ENCODE measurements at regions of chr15 and their contacts with region 1.

Region 1: DNA sequence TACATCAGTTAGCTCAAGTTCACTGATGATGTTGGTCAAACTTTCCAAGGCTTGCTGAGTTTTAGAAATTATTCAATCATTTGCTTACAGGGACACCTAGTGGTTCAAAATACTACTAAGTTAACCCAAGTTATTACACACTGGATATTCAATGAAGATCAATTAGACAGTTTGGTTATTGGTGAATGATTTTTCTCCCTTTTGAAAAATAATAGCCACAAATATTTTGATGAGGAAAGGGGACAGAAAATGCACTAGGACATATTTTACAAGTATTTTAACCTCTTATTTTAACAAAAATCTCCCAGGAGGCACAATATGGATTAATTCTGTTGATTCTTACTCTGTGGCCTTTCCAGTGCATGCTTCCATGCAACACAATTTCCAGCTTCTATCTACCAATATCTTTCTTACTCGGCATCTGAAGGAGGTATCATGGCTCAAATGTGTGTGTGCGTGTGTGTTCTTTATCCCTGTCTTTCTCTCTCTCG is 20.1 kb upstream of the GOLGA6L2 start:
- DNase-seq: peak in 1 of 2 experiments; percentile 28
- H3K4me3 ChIP-seq: no peak overlapping the region
- H3K4me3 Mint-ChIP-seq: no peak overlapping the region
- H3K27ac Mint-ChIP-seq: no peak overlapping the region
- H3K4me1 ChIP-seq: no peaks in the 10 kb centered on the region
- H3K4me1 Mint-ChIP-seq: no peaks in the 10 kb centered on the region
- H3K27me3 ChIP-seq: no peaks in the 10 kb centered on the region
- H3K27me3 Mint-ChIP-seq: peaks cover 9% of the 10 kb centered on the region
- CTCF ChIP-seq: peak; percentile 24 to 44

Region 2: DNA sequence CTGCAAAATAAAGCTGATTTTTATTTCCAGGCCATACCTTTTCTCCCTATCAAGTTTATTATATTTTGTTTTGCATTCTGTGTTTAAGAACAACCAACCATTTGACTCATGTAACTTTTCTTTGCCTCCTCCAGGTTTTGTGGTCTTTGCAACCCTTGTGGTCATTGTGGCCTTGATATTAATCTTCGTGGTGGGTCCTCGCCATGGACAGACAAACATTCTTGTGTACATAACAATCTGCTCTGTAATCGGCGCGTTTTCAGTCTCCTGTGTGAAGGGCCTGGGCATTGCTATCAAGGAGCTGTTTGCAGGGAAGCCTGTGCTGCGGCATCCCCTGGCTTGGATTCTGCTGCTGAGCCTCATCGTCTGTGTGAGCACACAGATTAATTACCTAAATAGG is 601.1 kb before region 1 on chr15:
- CTCF ChIA-PET with region 1: interaction called, 3 read pairs
- POLR2A ChIA-PET with region 1: no interaction called
- intact Hi-C with region 1: loop called (anchors 10 kb)
- DNase-seq: no peak
- H3K4me3 ChIP-seq: no peak overlapping the region
- H3K4me3 Mint-ChIP-seq: no peak overlapping the region
- H3K27ac Mint-ChIP-seq: no peak overlapping the region
- H3K4me1 ChIP-seq: no peaks in the 10 kb centered on the region
- H3K4me1 Mint-ChIP-seq: no peaks in the 10 kb centered on the region
- H3K27me3 ChIP-seq: no peaks in the 10 kb centered on the region
- H3K27me3 Mint-ChIP-seq: no peaks in the 10 kb centered on the region
- CTCF ChIP-seq: no peak

Region 3: DNA sequence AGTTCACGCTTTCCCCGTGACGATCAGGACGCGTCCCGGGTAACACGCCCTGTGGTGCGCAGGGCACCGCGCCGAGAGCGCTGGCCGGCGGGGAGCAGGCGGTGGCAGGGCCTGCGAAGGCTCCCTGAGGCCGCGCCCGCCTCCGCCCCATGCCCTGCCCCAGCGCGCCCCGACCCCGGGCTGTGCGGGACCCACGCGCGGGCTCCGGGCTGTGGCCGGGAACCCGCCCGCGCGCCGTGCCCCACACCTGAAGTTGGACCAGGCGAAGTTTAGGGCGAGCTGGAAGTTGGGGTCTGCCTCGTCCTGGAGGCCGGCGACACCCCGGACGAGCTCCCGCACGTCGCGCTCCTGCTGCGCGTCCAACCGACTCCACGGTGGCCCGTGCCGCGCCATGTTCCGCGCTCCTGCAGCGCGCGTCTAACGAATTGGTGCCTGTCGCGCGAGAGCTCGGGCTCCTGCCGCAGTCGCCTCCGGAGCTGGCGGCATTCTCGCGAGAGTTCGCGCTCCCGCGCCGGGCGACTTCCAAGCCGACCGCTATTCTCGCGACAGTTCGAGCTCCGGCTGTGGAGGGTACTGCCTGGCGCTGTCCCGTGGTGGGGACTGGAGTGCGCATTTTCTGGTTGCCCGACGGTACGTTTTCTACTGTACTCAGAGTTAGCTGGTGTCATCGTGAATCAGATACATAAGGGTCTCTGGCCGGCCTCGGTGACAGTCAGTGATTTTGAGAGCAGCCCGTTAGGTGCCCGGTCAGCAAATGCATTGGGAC is 427.8 kb before region 1 on chr15 and contains the start of gene TUBGCP5:
- CTCF ChIA-PET with region 1: interaction called, 3 read pairs
- POLR2A ChIA-PET with region 1: no interaction called
- intact Hi-C with region 1: loop called (anchors 2 kb)
- DNase-seq: peak; percentile 99 to 100
- H3K4me3 ChIP-seq: peak within 1 kb of the TSS; percentile 79
- H3K4me3 Mint-ChIP-seq: peak within 1 kb of the TSS; percentile 99
- H3K27ac Mint-ChIP-seq: peak within 1 kb of the TSS; percentile 99
- H3K4me1 ChIP-seq: peaks cover 11% of the 10 kb centered on the region
- H3K4me1 Mint-ChIP-seq: peaks cover 17% of the 10 kb centered on the region
- H3K27me3 ChIP-seq: no peaks in the 10 kb centered on the region
- H3K27me3 Mint-ChIP-seq: no peaks in the 10 kb centered on the region
- CTCF ChIP-seq: peak; percentile 27 to 44
- total RNA-seq, gene TUBGCP5: 48.3 and 53.1 TPM in 2 replicates

Region 4: GRCh38 chr15:23403550-23403949 is 63.6 kb before region 1 on chr15:
- CTCF ChIA-PET with region 1: no interaction called
- POLR2A ChIA-PET with region 1: no interaction called
- intact Hi-C with region 1: loop called (anchors 10 kb)
- DNase-seq: no peak
- H3K4me3 ChIP-seq: no peak overlapping the region
- H3K4me3 Mint-ChIP-seq: no peak overlapping the region
- H3K27ac Mint-ChIP-seq: no peak overlapping the region
- H3K4me1 ChIP-seq: no peaks in the 10 kb centered on the region
- H3K4me1 Mint-ChIP-seq: no peaks in the 10 kb centered on the region
- H3K27me3 ChIP-seq: no peaks in the 10 kb centered on the region
- H3K27me3 Mint-ChIP-seq: peaks cover 6% of the 10 kb centered on the region
- CTCF ChIP-seq: no peak

Region 5: DNA sequence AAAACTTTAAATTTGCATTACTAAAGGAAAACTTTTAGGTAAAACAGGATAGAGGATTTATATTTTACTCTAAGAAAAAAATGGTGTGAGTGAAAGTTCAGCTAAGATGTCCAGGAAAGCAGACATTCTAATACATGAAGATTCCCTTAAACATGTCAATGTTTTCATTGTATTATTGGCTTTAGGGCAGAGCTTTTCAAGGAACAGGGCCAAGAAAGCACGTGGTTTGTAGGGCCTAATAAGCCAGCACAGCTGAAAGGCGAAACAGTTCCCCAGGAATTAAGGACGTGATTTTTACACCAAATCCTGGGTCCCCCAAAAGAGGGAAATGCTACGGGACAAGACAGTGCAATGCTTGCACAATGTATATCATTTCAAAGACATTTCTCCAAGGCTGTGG is 49.7 kb after region 1 on chr15:
- CTCF ChIA-PET with region 1: no interaction called
- POLR2A ChIA-PET with region 1: no interaction called
- intact Hi-C with region 1: no loop called
- DNase-seq: no peak
- H3K4me3 ChIP-seq: no peak overlapping the region
- H3K4me3 Mint-ChIP-seq: no peak overlapping the region
- H3K27ac Mint-ChIP-seq: no peak overlapping the region
- H3K4me1 ChIP-seq: peaks cover 10% of the 10 kb centered on the region
- H3K4me1 Mint-ChIP-seq: no peaks in the 10 kb centered on the region
- H3K27me3 ChIP-seq: no peaks in the 10 kb centered on the region; the same call in 1 of the 2 replicates
- H3K27me3 Mint-ChIP-seq: peaks cover 3% of the 10 kb centered on the region
- CTCF ChIP-seq: no peak

Region 6: GRCh38 chr15:23595368-23595767 is 128.2 kb after region 1 on chr15:
- CTCF ChIA-PET with region 1: no interaction called
- POLR2A ChIA-PET with region 1: no interaction called
- intact Hi-C with region 1: no loop called
- DNase-seq: no peak
- H3K4me3 ChIP-seq: no peak overlapping the region
- H3K4me3 Mint-ChIP-seq: no peak overlapping the region
- H3K27ac Mint-ChIP-seq: no peak overlapping the region
- H3K4me1 ChIP-seq: no peaks in the 10 kb centered on the region
- H3K4me1 Mint-ChIP-seq: no peaks in the 10 kb centered on the region
- H3K27me3 ChIP-seq: no peaks in the 10 kb centered on the region
- H3K27me3 Mint-ChIP-seq: no peaks in the 10 kb centered on the region
- CTCF ChIP-seq: no peak

Region 7: DNA sequence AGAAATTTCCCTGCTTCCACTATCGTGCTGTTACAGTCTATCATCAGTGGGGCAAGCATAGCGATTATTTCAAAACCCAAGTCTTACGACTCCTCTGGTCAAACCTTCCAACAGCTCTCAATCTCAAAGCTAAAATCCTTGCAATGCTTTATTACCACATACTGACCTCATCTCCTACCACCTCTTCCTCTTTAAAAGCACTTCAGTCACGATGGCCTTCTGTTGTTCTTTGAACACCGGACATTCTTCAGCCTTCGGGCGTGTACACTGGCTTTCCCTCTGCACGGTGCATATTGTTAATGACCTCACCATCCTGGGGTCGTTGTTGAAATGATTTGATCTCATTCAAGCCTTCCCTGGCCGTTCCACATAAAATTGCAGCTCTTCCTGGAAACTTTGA is 149.4 kb after region 1 on chr15:
- CTCF ChIA-PET with region 1: no interaction called
- POLR2A ChIA-PET with region 1: no interaction called
- intact Hi-C with region 1: no loop called
- DNase-seq: peak in 1 of 2 experiments; percentile 9
- H3K4me3 ChIP-seq: no peak overlapping the region
- H3K4me3 Mint-ChIP-seq: no peak overlapping the region
- H3K27ac Mint-ChIP-seq: no peak overlapping the region
- H3K4me1 ChIP-seq: no peaks in the 10 kb centered on the region
- H3K4me1 Mint-ChIP-seq: no peaks in the 10 kb centered on the region
- H3K27me3 ChIP-seq: no peaks in the 10 kb centered on the region
- H3K27me3 Mint-ChIP-seq: peaks cover 4% of the 10 kb centered on the region
- CTCF ChIP-seq: no peak